Calu3 (cell line): ENCODE measurements at regions of chr14 and their contacts with region 1.

Region 1: GRCh38 chr14:61252369-61253063 is 28.6 kb downstream of the TMEM30B start:
- DNase-seq: peak; percentile 77
- H3K4me3 Mint-ChIP-seq: no peak overlapping the region
- H3K27ac Mint-ChIP-seq: no peak overlapping the region
- H3K4me1 Mint-ChIP-seq: peaks cover 7% of the 10 kb centered on the region
- H3K27me3 Mint-ChIP-seq: no peaks in the 10 kb centered on the region
- CTCF ChIP-seq: peak; percentile 50

Region 2: DNA sequence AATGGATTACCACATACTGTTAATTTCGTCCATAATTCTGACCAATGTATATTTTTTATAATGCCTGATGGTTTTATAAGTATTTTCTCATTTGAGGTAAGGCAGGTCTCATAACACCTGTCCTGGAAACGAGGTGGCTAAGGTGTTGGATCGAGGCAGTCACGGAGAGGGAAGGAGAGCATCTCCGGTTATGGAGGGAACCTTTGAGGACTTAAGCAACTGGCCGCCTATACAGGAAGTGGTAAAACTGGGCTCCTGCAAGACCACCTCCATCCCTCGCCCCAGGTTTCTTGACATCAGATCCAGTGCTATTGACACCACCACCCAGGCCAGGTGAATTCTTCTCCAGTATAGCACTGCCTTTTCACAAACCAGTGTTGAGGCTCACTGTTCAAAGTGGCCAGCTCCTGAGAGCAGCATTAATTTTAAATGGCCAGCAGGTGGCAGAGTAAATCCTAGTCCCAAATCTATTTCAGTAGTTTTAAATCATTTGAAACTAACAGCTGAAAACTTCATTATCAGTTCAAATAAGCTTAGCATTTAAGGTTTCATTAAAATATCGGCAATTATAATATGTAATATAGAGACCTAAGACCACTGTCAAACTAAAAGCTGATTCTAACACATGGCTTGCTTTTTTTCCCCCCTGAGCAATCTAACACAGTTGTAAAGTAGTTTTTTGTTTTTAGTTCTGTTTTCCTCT is 902.7 kb before region 1 on chr14:
- CTCF ChIA-PET with region 1: no interaction called
- intact Hi-C with region 1: loop called (anchors 10 kb)
- DNase-seq: peak; percentile 31
- H3K4me3 Mint-ChIP-seq: no peak overlapping the region
- H3K27ac Mint-ChIP-seq: no peak overlapping the region
- H3K4me1 Mint-ChIP-seq: no peaks in the 10 kb centered on the region
- H3K27me3 Mint-ChIP-seq: no peaks in the 10 kb centered on the region
- CTCF ChIP-seq: peak; percentile 65

Region 3: DNA sequence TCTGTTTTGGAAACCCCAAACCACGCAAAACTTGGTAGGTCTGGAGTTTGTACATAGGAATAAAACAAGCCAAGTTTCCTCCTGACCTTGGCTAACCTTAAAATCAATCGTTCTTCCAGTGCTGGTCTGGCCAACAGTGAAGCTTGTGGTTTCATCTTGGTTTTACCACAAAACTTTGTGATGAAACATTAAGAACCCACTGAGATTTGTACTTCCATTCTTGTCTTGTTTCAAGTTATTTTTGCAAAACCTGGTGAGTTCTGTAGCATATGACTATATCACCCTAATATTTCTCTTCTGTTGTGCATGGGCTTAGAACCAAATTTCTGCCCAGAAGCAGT is 629.6 kb before region 1 on chr14:
- CTCF ChIA-PET with region 1: interaction called, 13 read pairs
- intact Hi-C with region 1: loop called (anchors 1 kb)
- DNase-seq: no peak
- H3K4me3 Mint-ChIP-seq: no peak overlapping the region
- H3K27ac Mint-ChIP-seq: no peak overlapping the region
- H3K4me1 Mint-ChIP-seq: peaks cover 26% of the 10 kb centered on the region
- H3K27me3 Mint-ChIP-seq: no peaks in the 10 kb centered on the region
- CTCF ChIP-seq: no peak

Region 4: GRCh38 chr14:60980811-60981632 is 271.5 kb before region 1 on chr14 and contains the starts of genes SLC38A6 and TRMT5:
- CTCF ChIA-PET with region 1: interaction called, 4 read pairs
- intact Hi-C with region 1: loop called (anchors 5 kb)
- DNase-seq: peak; percentile 92
- H3K4me3 Mint-ChIP-seq: no peak within 1 kb of the TSS
- H3K27ac Mint-ChIP-seq: no peak within 1 kb of the TSS
- H3K4me1 Mint-ChIP-seq: peaks cover 9% of the 10 kb centered on the region
- H3K27me3 Mint-ChIP-seq: no peaks in the 10 kb centered on the region
- CTCF ChIP-seq: no peak
- total RNA-seq, gene SLC38A6: 9.9 and 13.4 TPM in 2 replicates
- total RNA-seq, gene TRMT5: 20.3 and 22.8 TPM in 2 replicates

Region 5: GRCh38 chr14:61196792-61197191 is 55.7 kb before region 1 on chr14:
- CTCF ChIA-PET with region 1: no interaction called
- intact Hi-C with region 1: no loop called
- DNase-seq: peak; percentile 4
- H3K4me3 Mint-ChIP-seq: no peak overlapping the region
- H3K27ac Mint-ChIP-seq: no peak overlapping the region
- H3K4me1 Mint-ChIP-seq: no peaks in the 10 kb centered on the region
- H3K27me3 Mint-ChIP-seq: no peaks in the 10 kb centered on the region
- CTCF ChIP-seq: no peak

Region 6: GRCh38 chr14:61213191-61213621 is 39.3 kb before region 1 on chr14:
- CTCF ChIA-PET with region 1: no interaction called
- intact Hi-C with region 1: no loop called
- DNase-seq: no peak
- H3K4me3 Mint-ChIP-seq: no peak overlapping the region
- H3K27ac Mint-ChIP-seq: no peak overlapping the region
- H3K4me1 Mint-ChIP-seq: no peaks in the 10 kb centered on the region
- H3K27me3 Mint-ChIP-seq: peaks cover under 1% of the 10 kb centered on the region
- CTCF ChIP-seq: no peak

Region 7: GRCh38 chr14:61280526-61281185 is 28.1 kb after region 1 on chr14:
- CTCF ChIA-PET with region 1: no interaction called
- intact Hi-C with region 1: no loop called
- DNase-seq: peak; percentile 87
- H3K4me3 Mint-ChIP-seq: peak overlapping the region; percentile 100
- H3K27ac Mint-ChIP-seq: peak overlapping the region; percentile 55
- H3K4me1 Mint-ChIP-seq: peaks cover 26% of the 10 kb centered on the region
- H3K27me3 Mint-ChIP-seq: no peaks in the 10 kb centered on the region
- CTCF ChIP-seq: peak; percentile 37